ENCODE measurements at regions of chr6 and their contacts with region 1.

Region 1: DNA sequence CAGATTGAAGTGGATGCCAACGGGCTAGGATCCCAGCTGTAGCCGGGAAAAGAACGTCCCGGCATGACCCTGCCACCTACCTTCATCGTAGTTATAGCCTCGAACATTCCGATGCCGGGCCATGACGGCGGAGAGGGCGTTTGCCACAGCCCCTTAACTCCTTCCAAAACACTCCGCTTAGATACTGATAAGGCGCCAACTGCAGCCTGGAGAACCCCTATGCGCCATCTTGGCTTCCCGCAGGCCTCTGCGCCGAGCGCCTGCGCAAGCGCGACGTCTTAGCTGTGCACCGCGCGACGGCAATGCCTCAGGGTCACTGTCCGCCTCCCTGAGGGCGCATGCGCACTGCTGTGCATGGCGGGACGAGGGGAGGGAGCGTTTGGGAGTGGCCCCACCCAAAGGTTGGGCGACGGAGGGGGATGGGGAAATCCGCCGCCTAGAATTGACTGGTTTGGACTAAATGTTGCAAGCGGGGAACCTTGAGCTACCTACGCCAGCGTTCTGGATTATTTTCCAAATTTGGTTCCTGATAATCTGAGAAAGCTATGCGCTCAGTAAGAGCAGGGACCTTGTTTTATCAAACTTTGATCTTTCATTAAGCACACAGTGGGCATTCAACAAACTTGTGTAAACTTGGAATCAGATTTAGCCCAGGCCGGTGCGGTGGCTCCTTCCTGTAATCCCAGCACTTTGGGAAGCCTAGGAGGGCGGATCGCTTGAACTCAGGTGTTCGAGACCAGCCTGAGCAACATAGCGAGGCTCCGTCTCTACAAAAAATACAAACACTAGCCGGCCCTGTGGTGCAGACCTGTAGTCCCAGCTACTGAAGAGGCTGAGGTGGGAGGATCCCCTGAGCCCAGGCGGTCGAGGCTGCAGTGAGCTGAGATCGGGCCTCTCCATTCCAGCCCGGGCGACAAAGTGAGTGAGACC is at the start of gene HBS1L:
- DNase-seq: peak; percentile 97 to 99 (median 98)
- H3K4me3 ChIP-seq: peak within 1 kb of the TSS; percentile 89 to 99 (median 99)
- H3K4me3 Mint-ChIP-seq: peak within 1 kb of the TSS; percentile 90 to 97
- H3K27ac ChIP-seq: peak within 1 kb of the TSS; percentile 97 to 98
- H3K27ac Mint-ChIP-seq: peak within 1 kb of the TSS; percentile 96 to 98 (median 98)
- H3K4me1 ChIP-seq: peaks cover 21 to 30% of the 10 kb centered on the region in 2 donors
- H3K4me1 Mint-ChIP-seq: peaks cover 28% of the 10 kb centered on the region
- H3K27me3 ChIP-seq: no peaks in the 10 kb centered on the region
- H3K27me3 Mint-ChIP-seq: peaks cover 0 to 2% (median 0%) of the 10 kb centered on the region in 3 donors
- CTCF ChIP-seq: no peak
- polyA plus RNA-seq, gene HBS1L: 16.0 to 48.9 (median 36.3) TPM

Region 2: DNA sequence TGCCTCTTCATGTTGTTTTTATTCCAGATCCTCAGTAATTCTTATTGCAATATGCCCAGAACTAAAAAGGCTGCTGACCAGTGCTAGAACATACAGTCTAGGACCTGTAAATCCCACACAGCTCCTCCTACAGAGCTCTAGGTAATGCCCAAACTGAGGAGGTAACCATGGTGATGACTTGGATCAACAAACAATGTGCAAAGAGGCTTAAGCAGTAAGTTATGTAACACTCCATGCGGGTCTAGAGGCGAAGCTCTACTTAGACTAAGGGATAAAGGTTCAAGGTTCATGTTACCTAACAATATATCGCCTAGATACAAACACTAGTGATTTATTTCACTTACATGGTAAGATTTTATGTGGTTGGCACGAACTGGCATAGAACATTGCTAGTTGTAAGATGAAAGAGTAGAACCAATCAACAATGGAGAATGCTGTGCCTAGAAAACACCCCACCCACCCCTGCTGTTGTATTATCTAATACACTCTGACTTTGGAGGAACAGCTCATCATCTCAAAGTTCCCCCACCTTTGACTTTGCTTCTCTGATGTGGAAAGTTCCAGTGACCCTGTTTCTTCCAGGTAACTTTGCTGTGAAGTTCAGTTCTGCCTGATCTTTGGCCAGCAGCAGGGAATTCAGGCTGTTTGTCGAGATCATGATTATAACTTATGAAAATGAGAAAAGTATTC is 347.3 kb before region 1 on chr6:
- intact Hi-C with region 1: no loop called
- DNase-seq: peak; percentile 29 to 61 (median 55)
- H3K4me3 ChIP-seq: no peak overlapping the region
- H3K4me3 Mint-ChIP-seq: no peak overlapping the region
- H3K27ac ChIP-seq: no peak overlapping the region
- H3K27ac Mint-ChIP-seq: peak overlapping the region in 6 of 7 donors; percentile 30 to 80 (median 53)
- H3K4me1 ChIP-seq: peaks cover 21% of the 10 kb centered on the region in 2 donors
- H3K4me1 Mint-ChIP-seq: peaks cover 25% of the 10 kb centered on the region
- H3K27me3 ChIP-seq: no peaks in the 10 kb centered on the region
- H3K27me3 Mint-ChIP-seq: peaks cover 2 to 8% (median 2%) of the 10 kb centered on the region in 3 donors
- CTCF ChIP-seq: no peak

Region 3: GRCh38 chr6:135088818-135089809 is 34.3 kb after region 1 on chr6:
- intact Hi-C with region 1: loop called (anchors 5 kb)
- DNase-seq: peak; percentile 70 to 90 (median 81)
- H3K4me3 ChIP-seq: peak overlapping the region; percentile 46 to 100 (median 92)
- H3K4me3 Mint-ChIP-seq: peak overlapping the region; percentile 74 to 90
- H3K27ac ChIP-seq: peak overlapping the region in 1 of 2 donors; percentile 92
- H3K27ac Mint-ChIP-seq: peak overlapping the region; percentile 65 to 92 (median 85)
- H3K4me1 ChIP-seq: peaks cover 16 to 26% of the 10 kb centered on the region in 2 donors
- H3K4me1 Mint-ChIP-seq: peaks cover 19% of the 10 kb centered on the region
- H3K27me3 ChIP-seq: no peaks in the 10 kb centered on the region
- H3K27me3 Mint-ChIP-seq: peaks cover 0 to 3% (median 0%) of the 10 kb centered on the region in 3 donors
- CTCF ChIP-seq: peak; percentile 89

Region 4: DNA sequence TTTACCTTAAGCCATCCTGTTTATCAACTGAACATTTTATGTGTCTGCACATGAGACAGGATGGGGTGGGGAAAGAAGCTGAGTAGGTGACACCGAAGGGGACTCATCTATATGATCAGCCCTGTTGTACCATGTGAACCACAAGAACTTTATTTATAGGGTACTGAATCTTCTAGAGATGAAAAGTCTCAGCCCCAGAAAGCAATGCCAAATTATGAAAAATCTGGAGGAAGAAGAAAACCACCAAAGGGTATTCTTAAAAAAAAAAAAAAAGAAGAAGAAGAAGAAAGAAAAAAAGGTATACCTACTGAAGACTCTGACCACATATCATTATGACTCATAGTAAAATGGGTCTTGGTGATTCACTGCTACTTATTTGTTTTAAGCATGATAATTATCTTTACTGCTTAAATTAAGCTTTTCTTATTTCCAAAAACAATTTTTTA is 39.6 kb after region 1 on chr6:
- intact Hi-C with region 1: loop called (anchors 5 kb)
- DNase-seq: peak in 1 of 3 donors; percentile 38
- H3K4me3 ChIP-seq: no peak overlapping the region
- H3K4me3 Mint-ChIP-seq: no peak overlapping the region
- H3K27ac ChIP-seq: no peak overlapping the region
- H3K27ac Mint-ChIP-seq: peak overlapping the region in 1 of 7 donors; percentile 10
- H3K4me1 ChIP-seq: peaks cover 0 to 2% of the 10 kb centered on the region in 2 donors
- H3K4me1 Mint-ChIP-seq: peaks cover 1% of the 10 kb centered on the region
- H3K27me3 ChIP-seq: no peaks in the 10 kb centered on the region
- H3K27me3 Mint-ChIP-seq: peaks cover 0 to 5% (median 0%) of the 10 kb centered on the region in 3 donors
- CTCF ChIP-seq: no peak